ENCODE measurements at regions of chr12 and their contacts with region 1.

Region 1: GRCh38 chr12:52023182-52023975 is 16.6 kb downstream of the TAMALIN start:
- DNase-seq: peak; percentile 85
- H3K4me3 Mint-ChIP-seq: peak overlapping the region; percentile 86
- H3K27ac Mint-ChIP-seq: peak overlapping the region; percentile 99
- H3K4me1 Mint-ChIP-seq: peaks cover 45% of the 10 kb centered on the region
- H3K27me3 Mint-ChIP-seq: peaks cover 14% of the 10 kb centered on the region

Region 2: GRCh38 chr12:51424662-51425438 is 598.5 kb before region 1 on chr12 and contains the start of gene SLC4A8:
- intact Hi-C with region 1: loop called (anchors 2 kb)
- DNase-seq: peak; percentile 75
- H3K4me3 Mint-ChIP-seq: peak within 1 kb of the TSS; percentile 82
- H3K27ac Mint-ChIP-seq: peak within 1 kb of the TSS; percentile 27
- H3K4me1 Mint-ChIP-seq: peaks cover 16% of the 10 kb centered on the region
- H3K27me3 Mint-ChIP-seq: peaks cover 18% of the 10 kb centered on the region
- total RNA-seq, gene SLC4A8: 2.4 and 2.6 TPM in 2 replicates

Region 3: GRCh38 chr12:51926718-51927117 is 96.7 kb before region 1 on chr12:
- intact Hi-C with region 1: loop called (anchors 1 kb)
- DNase-seq: peak; percentile 24
- H3K4me3 Mint-ChIP-seq: no peak overlapping the region
- H3K27ac Mint-ChIP-seq: no peak overlapping the region
- H3K4me1 Mint-ChIP-seq: peaks cover 13% of the 10 kb centered on the region
- H3K27me3 Mint-ChIP-seq: peaks cover 13% of the 10 kb centered on the region

Region 4: GRCh38 chr12:51970904-51971646 is 52.3 kb before region 1 on chr12:
- intact Hi-C with region 1: loop called (anchors 1 kb)
- DNase-seq: peak; percentile 56
- H3K4me3 Mint-ChIP-seq: peak overlapping the region; percentile 52
- H3K27ac Mint-ChIP-seq: peak overlapping the region; percentile 69
- H3K4me1 Mint-ChIP-seq: peaks cover 64% of the 10 kb centered on the region
- H3K27me3 Mint-ChIP-seq: peaks cover 27% of the 10 kb centered on the region

Region 5: GRCh38 chr12:52006726-52007157 is 16.6 kb before region 1 on chr12 and contains the start of gene TAMALIN:
- intact Hi-C with region 1: loop called (anchors 1 kb)
- DNase-seq: peak; percentile 70
- H3K4me3 Mint-ChIP-seq: peak within 1 kb of the TSS; percentile 84
- H3K27ac Mint-ChIP-seq: peak within 1 kb of the TSS; percentile 67
- H3K4me1 Mint-ChIP-seq: peaks cover 13% of the 10 kb centered on the region
- H3K27me3 Mint-ChIP-seq: peaks cover 38% of the 10 kb centered on the region
- total RNA-seq, gene TAMALIN: 8.9 and 12.8 TPM in 2 replicates

Region 6: GRCh38 chr12:52069327-52070184 is 46.2 kb after region 1 on chr12 and contains the start of gene ATG101:
- intact Hi-C with region 1: loop called (anchors 1 kb)
- DNase-seq: peak; percentile 84
- H3K4me3 Mint-ChIP-seq: peak within 1 kb of the TSS; percentile 96
- H3K27ac Mint-ChIP-seq: peak within 1 kb of the TSS; percentile 99
- H3K4me1 Mint-ChIP-seq: peaks cover 54% of the 10 kb centered on the region
- H3K27me3 Mint-ChIP-seq: peaks cover 2% of the 10 kb centered on the region
- total RNA-seq, gene ATG101: 56.2 and 63.3 TPM in 2 replicates

Region 7: DNA sequence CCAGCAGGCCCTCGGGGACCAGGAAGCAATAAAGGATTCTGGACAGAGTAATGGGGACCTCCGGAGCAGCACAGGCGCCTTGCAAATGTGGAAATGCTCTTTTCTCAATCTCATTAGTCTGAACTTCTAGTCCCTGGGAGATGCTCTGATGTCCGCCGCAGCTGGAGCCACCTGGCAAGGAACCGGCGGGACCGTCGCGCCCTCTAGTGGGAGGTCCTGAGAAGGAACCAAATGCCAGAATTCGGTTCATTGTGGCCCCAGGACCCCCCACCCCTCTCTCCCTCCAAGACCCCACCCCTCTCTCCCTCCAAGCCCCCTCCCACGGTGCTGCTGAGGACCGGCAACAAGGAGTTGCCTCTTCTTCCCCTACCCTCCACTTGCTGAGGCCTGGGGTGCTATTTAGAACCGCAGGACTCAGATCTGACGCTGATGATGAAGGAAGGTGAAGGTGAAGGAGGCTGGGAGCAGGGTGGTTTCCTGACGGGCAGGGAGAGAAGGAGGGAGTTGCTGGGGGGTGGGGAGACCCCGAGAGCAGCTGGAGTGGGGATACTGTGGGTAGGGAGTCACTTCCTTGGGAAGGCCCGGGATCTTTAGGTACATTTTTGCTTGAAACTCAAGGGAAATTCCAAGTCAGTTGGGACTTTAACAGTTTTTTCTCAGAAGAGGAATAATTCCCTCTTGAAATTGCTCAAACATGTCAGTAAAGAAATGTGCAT is 98.6 kb after region 1 on chr12:
- intact Hi-C with region 1: loop called (anchors 1 kb)
- DNase-seq: peak; percentile 50
- H3K4me3 Mint-ChIP-seq: no peak overlapping the region
- H3K27ac Mint-ChIP-seq: no peak overlapping the region
- H3K4me1 Mint-ChIP-seq: peaks cover 29% of the 10 kb centered on the region
- H3K27me3 Mint-ChIP-seq: peaks cover 17% of the 10 kb centered on the region

Region 8: GRCh38 chr12:52506858-52507715 is 483.7 kb after region 1 on chr12:
- intact Hi-C with region 1: no loop called
- DNase-seq: no peak
- H3K4me3 Mint-ChIP-seq: no peak overlapping the region
- H3K27ac Mint-ChIP-seq: no peak overlapping the region
- H3K4me1 Mint-ChIP-seq: no peaks in the 10 kb centered on the region
- H3K27me3 Mint-ChIP-seq: peaks cover 21% of the 10 kb centered on the region